ENCODE measurements at regions of chr16 and their contacts with region 1.

Region 1: GRCh38 chr16:28846080-28846932 is at the start of gene TUFM:
- DNase-seq: peak; percentile 92
- ATAC-seq: peak; percentile 95
- H3K4me3 ChIP-seq: peak within 1 kb of the TSS; percentile 96
- H3K27ac ChIP-seq: peak within 1 kb of the TSS; percentile 81
- H3K4me1 ChIP-seq: peaks cover 9% of the 10 kb centered on the region
- H3K27me3 ChIP-seq: no peaks in the 10 kb centered on the region
- CTCF ChIP-seq: peak; percentile 75 to 97 (median 79); a peak in 5 of 6 replicates
- EP300 ChIP-seq: 0 out of 4 replicates have a peak, but pooled peaks of 1 of the 2 experiments have one; percentile 26
- POLR2A ChIP-seq: peak; percentile 93
- RAD21 ChIP-seq: 0 out of 2 replicates have a peak, but pooled peaks have one; percentile 30
- polyA plus RNA-seq, gene TUFM: 23.4 to 101 TPM

Region 2: GRCh38 chr16:28823872-28824716 is 22.2 kb before region 1 on chr16:
- CTCF ChIA-PET with region 1: interaction called, 4 read pairs
- POLR2A ChIA-PET with region 1: interaction called, 28 read pairs
- RAD21 ChIA-PET with region 1: interaction called, 5 read pairs
- SMC1A ChIA-PET with region 1: interaction called, 4 read pairs
- in situ Hi-C with region 1: no loop called
- intact Hi-C with region 1: loop called (anchors 1 kb)
- DNase-seq: peak; percentile 86
- ATAC-seq: peak; percentile 90
- H3K4me3 ChIP-seq: peak overlapping the region; percentile 73
- H3K27ac ChIP-seq: peak overlapping the region; percentile 97
- H3K4me1 ChIP-seq: peaks cover 8% of the 10 kb centered on the region; the same call in 1 of the 2 replicates
- H3K27me3 ChIP-seq: no peaks in the 10 kb centered on the region
- CTCF ChIP-seq: 0 out of 6 replicates have a peak, but pooled peaks of 1 of the 3 experiments have one; percentile 13
- EP300 ChIP-seq: no peak
- POLR2A ChIP-seq: peak; percentile 66
- RAD21 ChIP-seq: no peak

Region 3: DNA sequence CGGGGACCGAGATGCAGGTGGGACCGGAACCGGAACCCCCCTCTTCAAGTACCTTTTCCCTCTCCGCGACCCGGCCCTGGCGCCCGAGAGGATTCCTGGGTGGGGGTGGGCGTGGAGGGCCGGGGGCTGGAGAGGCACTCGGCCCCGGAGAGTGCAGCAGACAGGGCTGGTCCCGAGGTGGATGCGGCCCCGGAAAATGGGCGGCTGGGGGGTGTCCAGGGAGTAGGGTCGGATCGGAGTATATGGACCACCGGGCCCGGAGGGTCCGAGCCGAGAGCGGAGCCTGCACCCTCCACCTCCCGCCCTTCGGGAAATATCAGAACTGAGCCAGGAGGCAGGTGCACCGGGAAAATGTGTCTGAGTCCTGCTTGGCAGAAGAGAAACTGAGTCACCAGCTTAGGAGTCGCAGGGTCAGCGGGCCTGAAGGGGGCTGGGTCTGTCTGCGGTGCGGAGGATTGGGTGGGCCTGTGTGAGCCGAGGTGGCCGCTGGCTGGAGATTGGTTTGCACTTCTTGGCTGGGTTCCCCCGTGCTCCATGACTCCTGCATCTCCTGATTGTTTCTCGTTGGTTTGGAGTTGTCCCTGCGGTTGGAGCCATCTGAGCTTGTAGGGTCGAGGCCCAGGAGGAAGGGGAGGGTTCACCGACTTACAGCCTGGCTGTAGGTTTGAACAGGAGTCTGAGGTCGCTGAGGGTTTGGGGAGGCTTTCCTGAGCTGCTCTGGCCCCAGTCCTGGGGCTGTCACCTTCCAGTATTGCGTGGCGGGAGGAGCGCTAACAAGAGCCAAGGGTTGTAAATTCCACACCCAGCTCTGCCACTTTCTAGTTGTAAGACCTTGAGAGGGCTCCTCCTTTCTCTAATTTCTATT is 17.9 kb after region 1 on chr16:
- CTCF ChIA-PET with region 1: interaction called, 21 read pairs
- POLR2A ChIA-PET with region 1: interaction called, 43 read pairs
- RAD21 ChIA-PET with region 1: interaction called, 17 read pairs
- SMC1A ChIA-PET with region 1: interaction called, 17 read pairs
- in situ Hi-C with region 1: no loop called
- intact Hi-C with region 1: loop called (anchors 2 kb)
- DNase-seq: no peak
- ATAC-seq: peak; percentile 19
- H3K4me3 ChIP-seq: peak overlapping the region; percentile 78
- H3K27ac ChIP-seq: peak overlapping the region; percentile 99
- H3K4me1 ChIP-seq: peaks cover 10% of the 10 kb centered on the region
- H3K27me3 ChIP-seq: no peaks in the 10 kb centered on the region
- CTCF ChIP-seq: no peak
- EP300 ChIP-seq: no peak
- POLR2A ChIP-seq: no peak
- RAD21 ChIP-seq: no peak

Region 4: DNA sequence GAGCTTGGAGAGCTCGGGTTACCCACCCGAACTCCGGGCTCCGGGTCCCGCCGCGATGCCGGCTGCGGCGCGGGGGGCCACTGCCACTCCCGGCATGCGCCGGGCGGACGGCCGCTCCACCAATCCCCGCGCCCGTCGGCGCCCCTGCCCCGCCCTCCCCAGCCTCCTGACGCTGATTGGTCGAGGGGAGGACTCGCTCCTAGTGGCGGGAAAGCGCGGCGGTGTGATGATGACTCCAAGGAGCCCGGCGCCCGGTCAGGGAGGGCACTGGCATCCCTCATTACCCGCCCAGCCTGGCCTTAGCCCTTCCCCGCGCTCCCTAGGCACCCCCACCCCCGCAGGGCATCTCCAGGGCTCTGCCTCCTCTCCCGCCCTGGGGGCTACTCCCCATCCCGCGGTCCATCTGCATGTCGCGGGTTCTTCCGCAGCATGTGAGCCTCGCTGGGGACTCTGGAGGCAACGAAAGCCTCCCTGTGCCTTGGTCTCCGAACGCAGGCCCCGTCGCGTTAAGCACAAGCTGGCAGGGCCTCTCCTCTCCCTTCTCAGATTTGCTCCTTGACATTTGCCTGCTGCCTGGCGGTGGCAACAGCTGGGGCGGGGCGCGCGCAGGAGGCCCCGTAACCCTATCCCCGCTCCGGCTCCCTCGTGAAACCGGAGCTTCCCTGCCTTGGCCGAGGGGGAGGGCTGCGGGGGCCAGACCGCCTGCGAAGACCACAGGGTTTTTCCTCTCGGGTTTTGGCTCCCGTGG is 33.7 kb after region 1 on chr16:
- CTCF ChIA-PET with region 1: no interaction called
- POLR2A ChIA-PET with region 1: interaction called, 3 read pairs
- RAD21 ChIA-PET with region 1: interaction called, 5 read pairs
- SMC1A ChIA-PET with region 1: no interaction called
- in situ Hi-C with region 1: no loop called
- intact Hi-C with region 1: loop called (anchors 2 kb)
- DNase-seq: peak; percentile 46
- ATAC-seq: peak; percentile 96
- H3K4me3 ChIP-seq: peak overlapping the region; percentile 95
- H3K27ac ChIP-seq: peak overlapping the region; percentile 37; the same call in 1 of the 2 replicates
- H3K4me1 ChIP-seq: peaks cover 13% of the 10 kb centered on the region
- H3K27me3 ChIP-seq: no peaks in the 10 kb centered on the region
- CTCF ChIP-seq: no peak
- EP300 ChIP-seq: no peak
- POLR2A ChIP-seq: peak; percentile 64
- RAD21 ChIP-seq: no peak

Region 5: GRCh38 chr16:28930652-28931051 is 84.3 kb after region 1 on chr16:
- CTCF ChIA-PET with region 1: interaction called, 3 read pairs
- POLR2A ChIA-PET with region 1: interaction called, 4 read pairs
- RAD21 ChIA-PET with region 1: interaction called, 5 read pairs
- SMC1A ChIA-PET with region 1: interaction called, 11 read pairs
- in situ Hi-C with region 1: no loop called
- intact Hi-C with region 1: loop called (anchors 2 kb)
- DNase-seq: peak; percentile 86
- ATAC-seq: peak; percentile 65
- H3K4me3 ChIP-seq: no peak overlapping the region
- H3K27ac ChIP-seq: peak overlapping the region; percentile 92
- H3K4me1 ChIP-seq: peaks cover 16% of the 10 kb centered on the region
- H3K27me3 ChIP-seq: no peaks in the 10 kb centered on the region
- CTCF ChIP-seq: no peak
- EP300 ChIP-seq: peak in 1 of 2 experiments; percentile 37; a peak in 1 of 4 replicates
- POLR2A ChIP-seq: peak; percentile 23; the same call in 1 of the 2 replicates
- RAD21 ChIP-seq: no peak